HCT116 (cell line): ENCODE measurements at regions of chr10 and their contacts with region 1.

Region 1: GRCh38 chr10:77710759-77711682 is 73.4 kb upstream of the KCNMA1 start:
- DNase-seq: peak; percentile 6
- ATAC-seq: peak; percentile 98
- H3K4me3 ChIP-seq: no peak overlapping the region
- H3K27ac ChIP-seq: no peak overlapping the region
- H3K4me1 ChIP-seq: peaks cover 0 to 7% of the 10 kb centered on the region in 2 experiments; a peak in 1 of 4 replicates
- H3K27me3 ChIP-seq: peaks cover 10% of the 10 kb centered on the region; the same call in 1 of the 2 replicates
- CTCF ChIP-seq: peak; percentile 67 to 97 (median 90)
- POLR2A ChIP-seq: no peak
- RAD21 ChIP-seq: peak; percentile 82

Region 2: DNA sequence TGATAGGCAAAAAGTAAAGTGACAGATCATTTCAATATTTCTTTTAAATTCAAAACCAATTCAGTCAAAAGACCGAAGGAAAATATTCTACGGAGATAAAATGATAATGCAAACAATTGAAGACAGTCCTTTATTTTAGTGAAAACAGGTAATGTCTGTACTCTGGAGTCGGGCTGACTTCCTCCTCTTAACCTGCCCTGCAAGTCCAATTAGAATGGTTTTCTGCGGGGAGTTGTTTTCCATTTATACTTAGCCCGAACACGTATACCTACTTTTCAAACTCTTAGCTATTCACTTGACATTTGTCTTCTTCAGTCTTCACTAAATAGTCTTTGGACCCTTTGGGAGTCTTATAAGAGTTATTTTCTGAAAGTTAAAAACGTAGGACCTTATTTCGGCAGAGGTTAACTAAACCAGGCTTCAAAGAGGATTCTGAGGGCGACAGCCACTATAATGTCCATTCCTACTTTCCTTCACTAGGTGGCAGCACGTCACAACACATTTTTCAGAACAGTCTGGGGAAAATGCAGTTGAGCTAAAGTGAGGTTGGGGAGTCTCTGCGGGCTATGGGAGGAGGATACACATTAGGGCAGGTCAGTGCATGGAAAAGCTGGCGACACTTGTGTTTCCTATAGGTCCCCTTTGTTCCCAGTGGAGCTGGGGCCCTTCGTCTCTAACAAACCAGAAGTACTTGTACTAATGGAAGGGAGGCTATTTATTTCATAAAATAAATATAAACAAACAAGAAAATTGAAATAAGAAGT is 545.4 kb before region 1 on chr10:
- CTCF ChIA-PET with region 1: interaction called, 37 read pairs
- POLR2A ChIA-PET with region 1: no interaction called
- RAD21 ChIA-PET with region 1: interaction called, 3 read pairs
- intact Hi-C with region 1: no loop called
- DNase-seq: peak; percentile 51
- ATAC-seq: peak; percentile 90
- H3K4me3 ChIP-seq: no peak overlapping the region
- H3K27ac ChIP-seq: no peak overlapping the region
- H3K4me1 ChIP-seq: peaks cover 0 to 31% of the 10 kb centered on the region in 2 experiments; a peak in 2 of 4 replicates
- H3K27me3 ChIP-seq: peaks cover 34% of the 10 kb centered on the region
- CTCF ChIP-seq: peak; percentile 72 to 78 (median 73)
- POLR2A ChIP-seq: no peak
- RAD21 ChIP-seq: peak; percentile 86

Region 3: DNA sequence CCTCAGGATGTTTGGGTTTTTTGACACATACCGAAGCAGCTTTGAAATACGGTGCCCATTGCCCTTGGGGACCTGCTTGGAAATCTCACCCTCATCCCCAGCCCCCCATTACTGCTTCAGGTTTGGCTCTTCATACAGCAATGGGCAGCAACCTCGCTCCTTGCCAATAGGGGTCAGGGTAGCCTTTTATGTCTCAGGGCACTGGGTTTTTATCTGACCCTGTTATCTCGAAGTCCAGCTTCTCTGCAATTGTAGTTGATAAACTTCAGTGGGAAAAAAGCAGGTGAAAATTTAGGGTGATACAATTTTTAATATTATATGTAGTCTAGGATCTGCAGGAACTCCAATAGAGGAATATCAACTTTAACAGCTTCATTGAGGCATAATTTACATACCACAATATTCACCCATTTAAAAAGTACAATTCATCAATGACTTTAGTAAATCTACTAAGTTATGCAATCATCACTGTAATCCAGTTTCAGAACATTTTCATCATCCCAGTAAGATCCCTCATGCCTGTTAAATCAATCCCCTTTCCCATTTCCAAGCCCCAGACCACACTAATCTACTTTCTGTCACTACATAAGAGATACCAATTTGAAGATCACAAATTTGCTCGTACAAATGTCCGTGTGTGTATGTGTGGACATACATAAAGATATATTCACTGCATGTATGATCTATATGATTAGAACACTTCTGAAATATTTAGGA is 459.6 kb before region 1 on chr10:
- CTCF ChIA-PET with region 1: no interaction called
- POLR2A ChIA-PET with region 1: no interaction called
- RAD21 ChIA-PET with region 1: no interaction called
- intact Hi-C with region 1: loop called (anchors 5 kb)
- DNase-seq: peak; percentile 13
- ATAC-seq: peak; percentile 87
- H3K4me3 ChIP-seq: no peak overlapping the region
- H3K27ac ChIP-seq: no peak overlapping the region
- H3K4me1 ChIP-seq: no peaks in the 10 kb centered on the region
- H3K27me3 ChIP-seq: peaks cover 19% of the 10 kb centered on the region; the same call in 1 of the 2 replicates
- CTCF ChIP-seq: peak; percentile 56 to 79 (median 71)
- POLR2A ChIP-seq: no peak
- RAD21 ChIP-seq: peak; percentile 74

Region 4: DNA sequence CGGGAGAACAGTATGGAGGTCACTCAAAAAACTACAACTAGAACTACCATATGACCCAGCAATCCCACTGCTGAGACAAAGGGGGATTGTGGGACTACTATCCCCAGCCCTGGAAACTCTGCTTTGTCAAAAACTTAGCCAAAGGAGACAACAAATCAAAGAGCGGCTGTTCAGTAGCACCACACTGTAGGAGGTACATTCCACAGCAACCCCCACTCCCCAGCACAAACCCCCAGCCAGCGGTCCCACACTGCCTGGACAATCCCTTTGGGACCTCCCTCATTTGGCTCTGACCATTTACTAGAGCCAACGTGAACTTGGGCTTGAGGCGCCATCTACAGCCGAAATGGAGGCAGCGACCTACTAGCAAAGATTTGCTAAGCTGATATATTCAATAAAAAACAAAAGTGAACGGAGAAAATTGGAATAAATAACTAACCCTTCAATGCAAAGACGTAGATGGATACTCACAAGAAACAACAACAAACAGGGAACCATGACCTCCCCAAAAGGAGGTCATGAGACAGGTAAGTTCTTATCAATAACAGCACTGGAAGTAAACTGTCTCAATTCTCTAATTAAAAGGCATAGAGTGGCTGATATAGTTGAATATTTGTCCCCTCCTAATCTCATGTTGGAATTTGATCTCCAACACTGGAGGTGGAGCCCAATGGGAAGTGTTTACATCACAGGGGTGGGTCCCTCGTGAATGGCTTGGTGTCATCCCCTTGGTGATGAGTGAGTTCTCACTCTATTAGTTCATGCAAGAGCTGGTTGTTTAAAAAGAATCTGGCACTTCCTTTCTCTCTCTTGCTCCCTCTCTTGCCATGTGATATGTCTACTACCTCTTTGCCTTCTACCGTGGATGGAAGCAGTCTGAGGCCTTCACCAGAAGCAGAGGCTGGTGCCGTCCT is 45.6 kb after region 1 on chr10:
- CTCF ChIA-PET with region 1: interaction called, 50 read pairs
- POLR2A ChIA-PET with region 1: no interaction called
- RAD21 ChIA-PET with region 1: no interaction called
- intact Hi-C with region 1: loop called (anchors 1 kb)
- DNase-seq: peak; percentile 47
- ATAC-seq: peak; percentile 99
- H3K4me3 ChIP-seq: no peak overlapping the region
- H3K27ac ChIP-seq: no peak overlapping the region
- H3K4me1 ChIP-seq: no peaks in the 10 kb centered on the region
- H3K27me3 ChIP-seq: no peaks in the 10 kb centered on the region
- CTCF ChIP-seq: peak; percentile 77 to 92 (median 81); a peak in 5 of 6 replicates
- POLR2A ChIP-seq: no peak
- RAD21 ChIP-seq: peak; percentile 81

Region 5: DNA sequence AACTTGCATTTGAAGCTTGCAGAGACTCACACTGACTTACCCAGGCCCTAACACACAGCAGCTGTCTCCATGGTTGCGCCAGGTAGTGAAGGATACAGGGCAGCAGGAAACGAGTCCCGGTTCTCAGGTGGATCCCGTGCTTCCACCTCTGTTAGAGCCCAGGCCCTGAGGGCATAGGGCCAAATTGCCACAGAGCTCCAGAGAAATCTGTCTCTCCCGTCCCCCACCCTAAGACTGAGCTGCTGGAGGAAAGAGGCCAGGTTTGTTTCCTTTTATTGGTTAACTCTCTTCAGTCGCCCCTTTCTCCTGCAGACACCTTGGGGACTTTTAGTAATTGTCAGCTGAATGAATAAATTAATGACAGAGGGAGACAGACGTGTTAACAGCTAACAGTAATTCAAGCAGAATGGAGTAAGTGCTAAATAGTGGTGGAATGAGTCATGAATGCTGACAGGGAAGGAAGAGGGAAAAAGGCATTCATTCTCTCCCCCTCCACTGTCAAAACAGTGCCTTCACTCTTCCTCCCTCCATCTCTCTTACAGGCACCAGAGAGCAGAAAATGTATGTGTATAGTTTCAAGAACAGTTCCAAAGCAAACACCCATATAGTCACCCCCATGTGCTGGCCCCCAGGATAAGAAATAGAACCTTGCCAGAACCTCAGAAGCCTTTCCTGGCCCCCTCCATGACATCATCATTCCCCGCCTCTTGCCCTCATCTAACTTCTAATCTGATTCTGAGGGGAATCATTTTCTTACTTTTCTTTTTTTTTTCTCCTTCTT is 232.3 kb after region 1 on chr10:
- CTCF ChIA-PET with region 1: no interaction called
- POLR2A ChIA-PET with region 1: no interaction called
- RAD21 ChIA-PET with region 1: no interaction called
- intact Hi-C with region 1: no loop called
- DNase-seq: peak; percentile 57
- ATAC-seq: peak; percentile 75
- H3K4me3 ChIP-seq: peak overlapping the region; percentile 0 to 42; a peak in 2 of 4 replicates
- H3K27ac ChIP-seq: peak overlapping the region; percentile 58
- H3K4me1 ChIP-seq: peaks cover 15 to 38% of the 10 kb centered on the region in 2 experiments
- H3K27me3 ChIP-seq: no peaks in the 10 kb centered on the region
- CTCF ChIP-seq: no peak
- POLR2A ChIP-seq: no peak
- RAD21 ChIP-seq: no peak